Head of caudate nucleus (tissue), 42 donors: ENCODE measurements at regions of chr14 and their contacts with region 1.

Region 1: DNA sequence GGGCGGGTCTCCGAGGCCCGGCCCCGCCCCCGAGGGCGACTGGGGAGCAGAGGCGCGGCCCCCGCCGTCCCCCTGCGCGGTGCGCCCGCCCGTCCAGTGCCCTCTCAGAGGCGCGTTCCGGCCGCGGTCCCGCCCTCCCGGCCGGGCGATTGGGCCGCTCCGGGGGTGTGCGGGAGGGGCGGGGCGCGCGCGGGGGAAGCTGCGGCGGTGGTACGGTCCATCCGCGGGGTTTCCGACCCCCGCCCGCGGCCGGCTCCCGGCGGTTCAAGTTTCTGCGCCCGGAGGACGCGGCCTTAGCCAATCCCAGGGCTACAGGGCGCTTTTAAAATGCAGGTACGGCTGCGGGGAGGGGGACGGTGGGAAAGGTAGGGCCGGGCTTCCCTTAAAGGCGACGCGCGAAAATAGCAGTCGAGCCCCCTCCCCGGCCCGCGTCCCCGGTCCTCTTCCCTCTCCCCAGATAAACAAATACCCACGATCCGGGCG is 317 bp upstream of the CCDC85C start:
- DNase-seq: peak; percentile 73 to 97 (median 94)

Region 2: DNA sequence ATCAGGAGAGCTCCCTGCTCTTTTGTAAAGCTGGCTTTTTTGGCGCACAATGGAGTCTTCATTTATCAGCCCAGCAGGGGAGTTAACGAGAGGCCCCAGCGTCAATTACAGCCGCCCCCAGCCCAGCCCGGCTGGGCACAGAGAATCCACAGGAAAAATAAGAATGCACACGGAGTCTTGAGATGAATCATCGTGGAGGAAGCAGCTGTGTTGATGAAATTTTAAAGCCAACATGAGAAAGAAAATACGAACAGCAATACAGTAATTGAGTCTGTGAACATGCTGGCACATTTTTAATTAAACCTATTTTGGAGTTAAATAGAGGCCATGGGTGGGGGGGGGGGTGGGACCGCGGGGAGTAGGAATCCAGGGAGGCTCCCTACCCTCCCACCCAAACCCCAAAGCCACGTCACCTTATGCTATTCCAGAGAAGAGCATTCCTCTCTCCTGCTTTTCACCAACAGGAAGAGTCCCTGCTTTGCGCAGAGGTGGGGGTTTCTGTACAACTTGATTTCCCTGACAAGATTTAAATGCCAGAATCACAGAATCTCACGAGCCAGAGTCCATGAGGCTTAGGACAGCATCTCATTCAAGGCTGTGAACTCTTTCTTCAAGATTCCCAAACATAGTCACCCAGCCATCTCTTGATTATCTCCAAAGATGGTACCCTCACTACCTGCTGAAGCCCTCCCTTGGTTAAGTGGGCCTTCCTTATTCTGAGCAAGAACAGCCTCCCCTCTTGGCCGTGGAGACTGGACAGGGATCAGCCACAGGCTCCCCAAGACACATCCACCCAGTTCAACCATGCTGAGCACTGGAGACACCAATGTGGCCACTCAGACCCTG is 72.8 kb before region 1 on chr14:
- intact Hi-C with region 1: no loop called
- DNase-seq: no peak

Region 3: DNA sequence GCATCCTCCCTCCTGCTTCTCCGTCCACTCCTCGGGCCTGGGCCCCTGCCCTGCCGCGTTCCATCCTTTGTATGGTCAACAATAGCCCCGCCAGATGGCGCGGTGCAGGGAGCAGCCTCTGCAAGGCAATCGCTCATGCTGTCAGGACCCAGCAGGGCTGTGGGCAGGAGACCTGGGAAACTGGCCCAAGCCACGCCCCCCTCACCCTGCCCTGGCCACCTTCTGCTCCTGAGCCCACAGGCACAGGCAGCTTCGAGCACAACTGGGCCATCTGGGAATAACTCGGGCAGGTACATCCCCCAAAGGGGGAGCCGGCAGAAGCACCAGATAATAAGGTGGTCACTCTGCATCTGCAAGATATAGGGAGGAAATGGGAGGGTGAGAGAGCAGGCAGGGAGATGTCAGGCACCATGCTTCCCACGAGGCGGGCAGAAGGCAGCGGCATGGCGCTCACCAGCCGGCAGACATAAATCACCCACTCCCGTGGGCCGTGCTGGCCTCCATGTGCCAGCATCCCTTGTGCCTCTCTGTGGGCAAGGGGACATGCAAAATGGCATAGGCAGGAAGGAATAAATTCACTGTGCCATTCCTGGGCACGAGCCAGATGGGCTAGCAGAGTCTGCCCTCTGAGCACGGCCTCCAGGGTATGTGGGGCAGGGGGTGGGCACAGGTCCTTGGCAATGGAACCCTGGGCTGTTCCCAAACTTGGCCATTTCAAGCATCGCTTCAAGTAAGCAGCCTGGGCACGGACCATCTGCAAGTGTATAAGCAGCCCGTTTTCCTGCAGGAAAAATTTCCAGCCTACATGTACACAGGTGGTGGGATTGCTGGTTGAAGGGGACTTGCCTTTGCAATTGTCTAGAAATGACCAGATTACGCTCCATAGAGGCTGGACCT is 40.8 kb before region 1 on chr14:
- intact Hi-C with region 1: loop called (anchors 5 kb)
- DNase-seq: peak; percentile 45 to 90 (median 78)